Activated T-helper 2 cell treated with anti-CD3 and anti-CD28 coated beads, Interferon-gamma antibody, Interleukin-2, Interleukin-4, amounts not matched to agents 10 μg/mL and 5 μg/mL and 100 μg/mL, durations not matched to agents 14 hours and 24 hours and 36 hours (primary cell): ENCODE measurements at regions of chr3 and their contacts with region 1.

Region 1: DNA sequence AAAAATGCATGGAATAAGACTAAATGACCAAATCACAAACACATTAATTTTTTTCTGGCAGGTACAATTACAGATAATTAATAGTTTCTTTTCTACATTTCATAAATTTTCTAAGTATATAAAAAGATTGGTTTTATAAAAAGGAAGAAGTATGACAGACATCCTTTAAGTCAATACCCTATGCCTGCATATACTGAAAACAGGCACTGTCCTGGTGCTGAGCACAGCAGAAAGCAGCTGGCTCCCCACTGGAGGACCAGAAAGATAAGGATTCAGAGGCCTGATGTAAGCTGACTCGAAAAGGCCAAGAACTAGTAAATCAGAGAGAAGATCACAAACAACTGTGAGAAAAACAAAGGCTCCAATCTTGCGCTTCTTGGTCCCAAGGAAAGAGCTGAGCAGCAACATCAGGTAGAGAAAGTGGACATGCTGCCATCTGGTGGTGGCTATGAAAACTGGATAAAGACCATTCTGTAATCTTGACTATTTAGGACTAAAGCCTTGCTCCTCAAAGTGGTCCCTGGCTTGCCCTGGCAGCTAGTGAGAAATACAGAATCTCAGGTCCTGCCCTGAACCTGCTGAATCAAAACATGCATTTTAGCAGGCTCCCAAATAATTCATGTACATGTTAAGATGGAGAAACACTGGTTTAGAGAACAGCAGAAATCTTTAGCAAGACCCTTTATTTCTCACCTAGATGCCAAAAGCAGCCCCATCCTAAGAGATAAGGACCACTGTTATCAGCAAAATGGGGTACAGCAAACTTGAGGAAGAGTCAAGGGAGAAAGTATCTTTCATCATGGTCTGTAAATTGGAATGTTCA is 76.0 kb downstream of the TRANK1 start:
- DNase-seq: peak; percentile 20
- H3K4me3 Mint-ChIP-seq: no peak overlapping the region
- H3K27ac Mint-ChIP-seq: no peak overlapping the region
- H3K4me1 Mint-ChIP-seq: peaks cover 6% of the 10 kb centered on the region
- H3K27me3 Mint-ChIP-seq: peaks cover 18% of the 10 kb centered on the region

Region 2: GRCh38 chr3:36729204-36730056 is 139.4 kb before region 1 on chr3:
- intact Hi-C with region 1: loop called (anchors 1 kb)
- DNase-seq: no peak
- H3K4me3 Mint-ChIP-seq: no peak overlapping the region
- H3K27ac Mint-ChIP-seq: no peak overlapping the region
- H3K4me1 Mint-ChIP-seq: no peaks in the 10 kb centered on the region
- H3K27me3 Mint-ChIP-seq: peaks cover 8% of the 10 kb centered on the region

Region 3: GRCh38 chr3:36792342-36792741 is 76.5 kb before region 1 on chr3:
- intact Hi-C with region 1: loop called (anchors 2 kb)
- DNase-seq: no peak
- H3K4me3 Mint-ChIP-seq: no peak overlapping the region
- H3K27ac Mint-ChIP-seq: no peak overlapping the region
- H3K4me1 Mint-ChIP-seq: no peaks in the 10 kb centered on the region
- H3K27me3 Mint-ChIP-seq: peaks cover 29% of the 10 kb centered on the region

Region 4: DNA sequence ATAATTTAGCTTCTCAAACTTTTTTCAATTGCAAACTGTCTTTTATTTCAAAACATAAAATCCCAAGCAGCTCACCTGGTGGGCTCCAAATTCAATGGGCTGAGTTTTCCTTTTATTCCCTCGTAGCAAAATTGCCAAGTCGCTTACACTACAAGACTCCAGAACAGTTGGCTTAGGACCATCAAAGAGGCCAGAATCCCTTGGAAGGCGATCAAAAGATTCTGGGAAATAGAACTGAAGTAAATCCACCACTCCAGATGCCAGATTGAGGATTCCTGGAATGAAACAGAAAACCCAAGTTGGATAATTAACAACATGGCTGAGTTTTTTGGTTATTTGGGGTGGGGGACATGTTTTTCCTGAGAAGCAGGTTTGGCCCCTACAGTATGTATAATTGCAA is 16.8 kb before region 1 on chr3:
- intact Hi-C with region 1: no loop called
- DNase-seq: no peak
- H3K4me3 Mint-ChIP-seq: no peak overlapping the region
- H3K27ac Mint-ChIP-seq: no peak overlapping the region
- H3K4me1 Mint-ChIP-seq: no peaks in the 10 kb centered on the region
- H3K27me3 Mint-ChIP-seq: peaks cover 2% of the 10 kb centered on the region